ENCODE measurements at regions of chr18 and their contacts with region 1.

Region 1: DNA sequence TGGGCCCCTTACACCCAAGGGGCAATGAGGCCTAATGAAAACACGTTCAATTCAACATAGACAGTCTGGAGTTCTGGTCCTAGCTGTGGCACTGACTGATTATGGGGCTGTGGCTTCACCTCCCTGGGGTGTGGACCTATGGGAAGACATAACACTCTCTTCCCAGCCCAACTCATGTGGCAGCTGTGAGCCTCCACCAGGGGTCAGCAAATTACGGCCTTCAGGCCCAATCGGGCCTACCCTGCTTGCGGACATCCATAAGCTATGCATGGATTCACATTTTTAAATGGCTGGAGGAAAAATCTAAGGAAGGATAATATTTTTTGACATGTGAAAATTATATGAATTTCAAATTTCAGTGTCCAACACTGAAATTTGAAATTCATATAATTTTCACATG is 101.3 kb downstream of the LOXHD1 start:
- DNase-seq: peak in 5 of 14 experiments; percentile 1 to 31 (median 14)
- ATAC-seq: no peak
- H3K4me3 ChIP-seq: no peak overlapping the region
- H3K4me3 Mint-ChIP-seq: no peak overlapping the region
- H3K27ac ChIP-seq: no peak overlapping the region
- H3K27ac Mint-ChIP-seq: no peak overlapping the region
- H3K4me1 ChIP-seq: no peaks in the 10 kb centered on the region
- H3K4me1 Mint-ChIP-seq: no peaks in the 10 kb centered on the region
- H3K27me3 ChIP-seq: no peaks in the 10 kb centered on the region
- H3K27me3 Mint-ChIP-seq: no peaks in the 10 kb centered on the region
- CTCF ChIP-seq: peak; percentile 16

Region 2: DNA sequence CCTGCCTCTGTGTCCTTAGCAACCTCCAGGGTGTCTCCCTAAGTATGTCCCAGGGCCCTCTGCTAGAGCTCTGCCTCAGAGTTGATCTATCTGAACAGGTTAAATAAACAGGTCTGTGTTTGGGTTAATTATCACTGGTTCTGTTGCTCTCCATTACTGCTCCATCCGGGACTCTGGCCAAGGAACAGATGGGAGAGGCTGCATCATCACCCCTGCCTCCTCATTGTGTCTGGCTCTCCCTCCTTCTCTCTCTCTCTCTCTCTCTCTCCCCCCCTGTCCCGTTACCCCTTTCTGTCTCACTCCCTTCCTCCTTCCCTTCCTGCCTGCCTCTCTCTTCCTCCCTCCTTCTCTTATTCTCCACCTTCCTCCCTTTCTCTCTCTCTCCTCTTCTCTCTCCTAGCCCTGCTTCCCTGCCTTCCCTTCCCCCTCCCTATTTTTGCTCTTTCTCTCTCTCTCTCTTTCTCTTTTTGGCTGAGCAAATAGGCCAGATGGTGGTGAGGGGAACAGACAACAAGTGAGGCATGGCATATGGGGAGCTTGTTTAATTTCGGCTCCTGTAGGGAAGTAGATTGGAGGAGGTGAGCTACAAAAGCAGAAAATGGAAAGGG is 1812.9 kb before region 1 on chr18:
- CTCF ChIA-PET with region 1: no interaction called
- POLR2A ChIA-PET with region 1: no interaction called
- intact Hi-C with region 1: no loop called
- DNase-seq: no peak
- ATAC-seq: no peak
- H3K4me3 ChIP-seq: no peak overlapping the region
- H3K4me3 Mint-ChIP-seq: no peak overlapping the region
- H3K27ac ChIP-seq: no peak overlapping the region
- H3K27ac Mint-ChIP-seq: no peak overlapping the region
- H3K4me1 ChIP-seq: no peaks in the 10 kb centered on the region
- H3K4me1 Mint-ChIP-seq: no peaks in the 10 kb centered on the region
- H3K27me3 ChIP-seq: no peaks in the 10 kb centered on the region
- H3K27me3 Mint-ChIP-seq: no peaks in the 10 kb centered on the region
- CTCF ChIP-seq: no peak

Region 3: DNA sequence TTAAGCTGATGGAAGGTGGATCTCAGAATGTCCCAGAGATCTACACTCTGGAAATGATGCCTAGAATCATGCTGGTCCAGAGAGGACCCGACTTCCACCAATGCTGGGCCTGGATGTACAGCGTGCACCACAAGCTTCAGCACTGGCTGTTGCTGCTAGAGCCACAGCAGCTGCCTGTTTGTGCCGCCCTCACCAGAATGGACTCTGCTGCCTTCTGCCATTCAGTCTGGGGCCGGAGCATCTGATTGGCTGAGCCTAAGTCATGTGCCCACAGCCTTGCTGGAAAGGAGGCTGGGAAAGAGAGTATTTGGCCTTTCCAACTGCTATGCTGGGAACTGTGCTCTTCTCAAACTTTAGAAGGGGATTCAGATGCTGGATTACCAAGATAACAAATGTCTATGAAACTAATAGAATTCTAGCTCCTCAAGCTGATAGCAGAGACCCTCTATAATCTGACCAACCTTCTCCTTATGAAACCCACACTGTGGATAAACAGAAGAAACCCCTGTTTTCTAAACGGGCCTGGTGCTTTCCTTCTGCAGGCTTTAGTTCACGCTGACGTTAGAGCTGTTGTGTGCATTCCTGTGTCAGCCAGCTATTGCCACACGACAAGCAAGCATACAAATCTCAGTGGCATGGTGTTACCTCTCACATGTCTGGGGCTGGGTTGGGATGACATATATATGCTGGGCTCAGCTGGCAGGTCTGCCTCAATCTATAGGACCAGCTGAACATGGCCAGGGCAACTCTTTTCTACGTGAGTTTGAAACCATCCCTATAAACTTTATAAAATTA is 105.4 kb after region 1 on chr18:
- CTCF ChIA-PET with region 1: interaction called, 3 read pairs
- POLR2A ChIA-PET with region 1: no interaction called
- intact Hi-C with region 1: loop called in 1 of 2 experiments (anchors 2 kb)
- DNase-seq: no peak
- ATAC-seq: no peak
- H3K4me3 ChIP-seq: no peak overlapping the region
- H3K4me3 Mint-ChIP-seq: no peak overlapping the region
- H3K27ac ChIP-seq: no peak overlapping the region
- H3K27ac Mint-ChIP-seq: no peak overlapping the region
- H3K4me1 ChIP-seq: peaks cover 3% of the 10 kb centered on the region
- H3K4me1 Mint-ChIP-seq: no peaks in the 10 kb centered on the region
- H3K27me3 ChIP-seq: no peaks in the 10 kb centered on the region
- H3K27me3 Mint-ChIP-seq: no peaks in the 10 kb centered on the region
- CTCF ChIP-seq: no peak